Heart right ventricle (tissue), 16 donors: ENCODE measurements at regions of chr2 and their contacts with region 1.

Region 1: GRCh38 chr2:235746257-235747084 is 252.6 kb downstream of the AGAP1 start:
- DNase-seq: peak in 1 of 2 donors; percentile 64
- ATAC-seq: peak; percentile 77 to 94 (median 90)
- H3K4me3 ChIP-seq: no peak overlapping the region
- H3K27ac ChIP-seq: no peak overlapping the region
- H3K4me1 ChIP-seq: peaks cover 0 to 12% (median 0%) of the 10 kb centered on the region in 9 donors
- H3K27me3 ChIP-seq: no peaks in the 10 kb centered on the region
- CTCF ChIP-seq: peak; percentile 67 to 87 (median 73)

Region 2: GRCh38 chr2:235129850-235130249 is 616.6 kb before region 1 on chr2:
- intact Hi-C with region 1: loop called in 8 of 10 experiments (anchors 5 kb)
- DNase-seq: no peak
- ATAC-seq: no peak
- H3K4me3 ChIP-seq: no peak overlapping the region
- H3K27ac ChIP-seq: no peak overlapping the region
- H3K4me1 ChIP-seq: no peaks in the 10 kb centered on the region
- H3K27me3 ChIP-seq: peaks cover 0 to 31% (median 0%) of the 10 kb centered on the region in 7 donors
- CTCF ChIP-seq: no peak

Region 3: DNA sequence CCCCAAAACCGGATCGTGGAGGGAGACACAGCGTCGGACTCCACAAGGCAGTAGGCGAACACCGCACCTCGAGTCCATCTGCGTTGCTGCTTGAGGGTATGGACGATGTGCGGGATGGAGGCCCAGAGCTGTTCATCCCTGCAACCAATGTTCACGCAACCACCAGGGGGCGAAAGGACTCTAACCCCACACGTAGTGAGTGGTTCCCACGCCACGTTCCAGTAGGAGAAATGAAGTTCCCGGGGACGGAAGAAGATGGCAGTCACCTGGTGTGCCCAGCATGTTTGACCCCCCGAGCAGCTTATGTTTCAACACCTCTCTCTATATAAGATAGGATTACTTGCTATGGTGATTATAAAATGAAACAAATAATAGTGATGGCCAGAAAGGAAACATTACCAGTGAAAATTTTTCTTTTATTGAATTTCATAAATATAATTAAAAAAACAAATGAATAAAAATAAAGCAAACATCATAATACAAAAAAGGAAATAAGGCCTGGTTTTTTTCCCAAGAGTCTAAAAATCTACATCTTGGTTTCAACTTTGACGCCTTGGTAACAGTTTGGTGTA is 610.4 kb before region 1 on chr2:
- intact Hi-C with region 1: loop called in 9 of 10 experiments (anchors 1 to 5 kb)
- DNase-seq: peak; percentile 79 to 80
- ATAC-seq: peak; percentile 79 to 92 (median 88)
- H3K4me3 ChIP-seq: no peak overlapping the region
- H3K27ac ChIP-seq: no peak overlapping the region
- H3K4me1 ChIP-seq: peaks cover 0 to 4% (median 0%) of the 10 kb centered on the region in 9 donors
- H3K27me3 ChIP-seq: peaks cover 0 to 11% (median 0%) of the 10 kb centered on the region in 7 donors
- CTCF ChIP-seq: peak; percentile 23 to 83 (median 75)

Region 4: DNA sequence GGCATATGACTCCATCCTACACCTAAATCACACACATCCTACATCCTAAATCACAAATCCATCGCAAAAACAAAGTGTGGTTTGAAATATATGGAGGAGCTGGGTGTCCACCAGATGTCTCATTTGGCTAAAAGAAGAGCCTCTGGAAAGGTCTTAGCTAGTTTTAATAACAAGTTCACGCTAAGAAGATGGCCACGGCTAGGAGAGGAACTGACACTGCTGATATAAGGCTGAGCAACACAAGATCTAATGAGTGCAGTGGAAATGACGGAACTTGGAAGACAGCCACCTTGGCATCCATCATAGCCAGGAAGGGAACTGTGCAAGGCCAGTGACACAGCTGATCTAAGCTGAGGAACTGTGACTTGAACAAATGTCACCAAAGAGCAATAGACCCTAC is 312.6 kb before region 1 on chr2:
- intact Hi-C with region 1: loop called in 1 of 10 experiments (anchors 5 kb)
- DNase-seq: peak in 1 of 2 donors; percentile 79
- ATAC-seq: peak; percentile 90 to 96 (median 92)
- H3K4me3 ChIP-seq: no peak overlapping the region
- H3K27ac ChIP-seq: peak overlapping the region; percentile 7 to 79 (median 67)
- H3K4me1 ChIP-seq: peaks cover 0 to 23% (median 20%) of the 10 kb centered on the region in 9 donors
- H3K27me3 ChIP-seq: no peaks in the 10 kb centered on the region
- CTCF ChIP-seq: peak in 6 of 9 donors; percentile 14 to 52 (median 40)

Region 5: GRCh38 chr2:235669269-235669831 is 77.1 kb before region 1 on chr2:
- intact Hi-C with region 1: loop called in 4 of 10 experiments (anchors 5 to 10 kb)
- DNase-seq: peak; percentile 68 to 77
- ATAC-seq: peak; percentile 50 to 82 (median 72)
- H3K4me3 ChIP-seq: peak overlapping the region in 9 of 10 donors; percentile 46 to 62 (median 55)
- H3K27ac ChIP-seq: no peak overlapping the region
- H3K4me1 ChIP-seq: peaks cover 0 to 49% (median 23%) of the 10 kb centered on the region in 9 donors
- H3K27me3 ChIP-seq: peaks cover 0 to 65% (median 0%) of the 10 kb centered on the region in 7 donors
- CTCF ChIP-seq: peak in 2 of 9 donors; percentile 14 to 21

Region 6: DNA sequence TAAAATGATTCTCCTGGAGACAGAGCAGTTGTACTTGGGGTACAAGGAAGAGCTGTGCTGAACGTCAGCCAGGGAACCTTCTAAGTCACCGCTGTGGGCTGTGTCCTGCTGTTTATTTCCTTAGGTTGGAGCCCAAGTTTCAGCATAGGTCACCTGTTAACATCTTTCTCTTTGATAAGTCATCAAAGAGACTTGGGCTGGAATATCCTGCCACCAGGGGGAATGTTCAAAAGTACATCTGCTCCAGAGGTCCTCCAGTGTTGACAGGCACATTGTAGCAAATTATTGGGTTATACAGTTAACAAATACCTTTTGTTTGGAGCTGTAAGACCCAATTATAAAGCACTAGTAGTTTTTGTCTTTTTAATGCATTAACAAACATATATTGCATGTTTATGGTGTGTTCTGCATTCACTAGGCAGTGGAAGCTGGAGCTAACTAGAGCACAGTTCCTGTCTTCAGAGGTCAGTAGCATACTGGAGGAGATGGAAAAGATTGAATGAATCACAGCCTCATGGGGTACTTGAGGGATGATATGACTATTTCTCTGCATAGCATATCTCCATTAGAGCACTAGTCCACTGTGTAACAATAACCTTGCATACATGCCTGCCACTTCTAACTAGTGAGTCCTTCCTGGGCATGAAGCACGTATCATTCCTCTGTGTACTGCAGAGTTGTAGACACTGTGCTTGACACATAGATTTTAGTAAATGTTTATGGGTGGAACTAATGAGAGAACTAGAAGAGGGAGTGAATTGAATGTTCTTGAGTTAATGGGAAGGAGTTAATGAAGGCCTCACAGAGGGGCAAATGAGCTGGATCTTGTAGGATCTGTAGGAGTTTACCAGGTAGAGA is 70.6 kb before region 1 on chr2:
- intact Hi-C with region 1: loop called in 5 of 10 experiments (anchors 5 to 10 kb)
- DNase-seq: no peak
- ATAC-seq: no peak
- H3K4me3 ChIP-seq: no peak overlapping the region
- H3K27ac ChIP-seq: no peak overlapping the region
- H3K4me1 ChIP-seq: peaks cover 2 to 54% (median 23%) of the 10 kb centered on the region in 9 donors
- H3K27me3 ChIP-seq: peaks cover 0 to 20% (median 0%) of the 10 kb centered on the region in 7 donors
- CTCF ChIP-seq: peak in 1 of 9 donors; percentile 6